Ascending aorta (tissue), 2 donors: ENCODE measurements at regions of chr1 and their contacts with region 1.

Region 1: GRCh38 chr1:192609110-192610079 is 26.6 kb upstream of the RGS13 start:
- DNase-seq: peak; percentile 63 to 83
- H3K4me3 ChIP-seq: no peak overlapping the region
- H3K27ac ChIP-seq: no peak overlapping the region
- H3K4me1 ChIP-seq: no peaks in the 10 kb centered on the region
- H3K27me3 ChIP-seq: no peaks in the 10 kb centered on the region
- CTCF ChIP-seq: no peak

Region 2: DNA sequence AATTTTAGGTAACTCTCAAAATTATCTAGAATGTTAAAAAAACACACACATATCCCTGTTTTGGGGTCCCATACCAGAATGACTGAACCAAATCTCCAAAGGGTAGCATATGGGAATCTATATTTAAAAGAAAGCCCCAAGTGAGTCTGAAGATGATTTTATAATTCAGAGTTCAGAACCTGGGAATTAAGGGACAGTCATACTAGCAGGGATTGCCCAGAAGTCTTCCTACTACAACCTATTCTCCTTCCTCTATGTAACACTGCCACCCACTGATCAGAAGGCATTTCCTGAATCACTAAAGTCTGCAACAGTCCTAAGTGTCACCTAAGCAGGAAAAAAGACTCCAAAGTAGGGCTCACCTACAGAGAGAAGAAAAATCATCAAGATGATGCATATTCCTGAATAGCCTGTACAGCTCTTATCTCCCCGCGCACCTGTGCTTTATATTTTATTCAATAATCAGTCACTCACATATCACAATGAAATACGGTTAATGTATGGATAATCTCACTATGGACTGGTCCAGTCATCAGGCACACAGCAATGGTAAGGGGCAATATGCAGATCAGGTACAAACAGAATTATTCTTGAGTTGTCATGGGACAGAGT is 28.9 kb before region 1 on chr1:
- intact Hi-C with region 1: loop called (anchors 2 kb)
- DNase-seq: no peak
- H3K4me3 ChIP-seq: no peak overlapping the region
- H3K27ac ChIP-seq: no peak overlapping the region
- H3K4me1 ChIP-seq: no peaks in the 10 kb centered on the region
- H3K27me3 ChIP-seq: no peaks in the 10 kb centered on the region
- CTCF ChIP-seq: peak; percentile 39 to 64 (median 50)